ENCODE measurements at regions of chr5 and their contacts with region 1.

Region 1: GRCh38 chr5:132238169-132238744 is 10.6 kb upstream of the P4HA2 start:
- DNase-seq: peak; percentile 72
- CTCF ChIP-seq: peak; percentile 87

Region 2: GRCh38 chr5:132180134-132180745 is 58.0 kb before region 1 on chr5:
- CTCF ChIA-PET with region 1: interaction called, 29 read pairs
- POLR2A ChIA-PET with region 1: no interaction called
- DNase-seq: peak; percentile 64
- CTCF ChIP-seq: peak; percentile 63

Region 3: DNA sequence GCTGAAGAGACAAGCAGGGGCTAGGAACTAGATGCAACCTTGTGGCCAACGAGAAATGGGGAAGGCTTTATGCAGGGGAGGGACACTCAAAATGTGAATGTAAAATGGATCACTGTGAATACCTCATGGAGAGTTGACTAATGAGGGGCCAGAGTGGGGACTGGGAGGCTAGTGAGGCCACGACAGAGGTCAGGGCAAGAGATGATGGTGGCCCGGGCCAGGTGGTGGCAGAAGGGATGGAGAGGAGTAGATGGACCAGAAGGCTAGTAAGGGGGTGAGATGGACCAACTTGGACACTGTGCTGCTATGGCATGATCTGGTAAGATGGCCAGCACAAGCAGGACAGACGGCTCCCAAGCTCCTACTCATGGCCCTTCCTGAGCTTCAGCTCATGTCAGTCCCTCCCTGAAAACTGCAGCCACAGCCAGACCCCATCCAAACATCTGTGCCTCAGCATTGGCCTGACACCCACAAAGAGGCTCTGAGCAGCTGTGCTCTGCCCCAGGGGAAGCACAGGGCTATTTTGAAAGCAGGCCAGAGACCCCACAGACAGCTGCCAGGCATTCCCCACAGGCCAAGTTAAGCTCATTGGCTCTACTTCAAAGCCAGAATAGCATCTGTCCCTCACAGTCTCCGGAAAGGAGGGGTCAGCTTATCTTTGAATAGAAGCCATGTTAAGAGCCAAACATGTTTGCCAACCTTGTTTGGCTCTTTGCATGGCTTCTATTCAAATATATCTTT is 32.7 kb before region 1 on chr5:
- CTCF ChIA-PET with region 1: interaction called, 78 read pairs
- POLR2A ChIA-PET with region 1: no interaction called
- DNase-seq: peak; percentile 32
- CTCF ChIP-seq: no peak

Region 4: GRCh38 chr5:132227485-132228240 is 10.6 kb before region 1 on chr5 and contains the start of gene P4HA2:
- CTCF ChIA-PET with region 1: interaction called, 124 read pairs
- POLR2A ChIA-PET with region 1: interaction called, 14 read pairs
- DNase-seq: peak; percentile 94
- CTCF ChIP-seq: no peak

Region 5: GRCh38 chr5:132272311-132273210 is 34.3 kb after region 1 on chr5:
- CTCF ChIA-PET with region 1: interaction called, 81 read pairs
- POLR2A ChIA-PET with region 1: interaction called, 4 read pairs
- DNase-seq: peak; percentile 70
- CTCF ChIP-seq: peak; percentile 71

Region 6: DNA sequence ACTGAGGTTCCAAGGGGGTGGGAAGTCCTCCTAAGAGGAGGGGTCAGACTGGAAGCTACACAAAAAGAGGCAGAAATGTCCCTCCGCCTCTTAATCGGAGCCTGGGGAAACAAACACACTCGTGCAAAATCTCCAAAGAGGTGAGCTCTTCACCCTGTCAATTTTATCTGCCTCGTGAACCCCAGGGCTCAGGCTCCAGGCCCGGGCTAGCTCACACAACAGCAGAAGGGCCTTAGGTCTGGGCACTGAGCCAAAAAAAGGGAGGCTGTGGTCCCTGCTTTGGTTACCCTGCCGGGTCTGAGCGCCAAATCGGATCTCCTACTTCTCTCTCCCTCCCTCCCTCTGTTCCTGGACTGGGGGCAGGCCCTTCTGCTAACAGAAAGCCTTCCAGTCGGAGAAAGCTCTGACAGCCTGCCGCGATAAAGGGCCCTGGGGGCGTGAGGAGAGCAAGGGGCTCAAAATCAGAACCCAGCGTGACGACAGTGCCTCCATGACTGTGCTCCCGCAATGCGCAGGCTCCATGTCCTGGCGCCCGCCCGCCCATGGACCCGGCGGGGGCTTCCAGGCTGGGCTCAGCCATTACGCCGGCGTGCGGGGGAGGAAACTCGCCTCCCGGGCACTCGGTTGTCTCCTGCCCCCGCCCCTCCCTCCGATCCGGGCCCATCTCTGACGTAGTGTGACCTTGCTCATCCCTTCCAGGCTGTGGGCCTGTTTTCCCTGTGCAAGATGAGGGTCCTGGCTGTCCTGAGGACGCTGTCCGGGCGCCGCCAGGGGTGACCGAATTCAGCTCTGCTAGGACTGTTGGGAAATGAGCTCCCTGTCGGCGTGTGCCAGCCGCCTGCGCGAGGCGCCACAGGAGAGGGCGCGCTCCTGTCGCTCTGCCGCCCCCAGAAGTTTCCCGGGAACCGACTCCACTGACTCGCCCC is 55.1 kb after region 1 on chr5:
- CTCF ChIA-PET with region 1: interaction called, 17 read pairs
- POLR2A ChIA-PET with region 1: interaction called, 3 read pairs
- DNase-seq: peak; percentile 77
- CTCF ChIP-seq: no peak

Region 7: GRCh38 chr5:133063965-133064364 is 825.7 kb after region 1 on chr5:
- CTCF ChIA-PET with region 1: no interaction called
- POLR2A ChIA-PET with region 1: no interaction called
- DNase-seq: no peak
- CTCF ChIP-seq: no peak

Measured in GM10248 (cell line).